ENCODE measurements at regions of chr4 and their contacts with region 1.

Region 1: GRCh38 chr4:127632420-127633403 is at the start of gene INTU:
- DNase-seq: peak; percentile 96
- H3K4me3 ChIP-seq: peak within 1 kb of the TSS; percentile 70 to 91 (median 90)
- H3K27ac ChIP-seq: peak within 1 kb of the TSS; percentile 92
- H3K4me1 ChIP-seq: peaks cover 16% of the 10 kb centered on the region
- H3K27me3 ChIP-seq: no peaks in the 10 kb centered on the region
- CTCF ChIP-seq: no peak
- total RNA-seq, gene INTU: 6.3 to 25.5 TPM

Region 2: GRCh38 chr4:127604949-127605709 is 27.6 kb before region 1 on chr4:
- CTCF ChIA-PET with region 1: interaction called, 15 read pairs
- dilution Hi-C with region 1: no loop called
- in situ Hi-C with region 1: no loop called
- intact Hi-C with region 1: no loop called
- DNase-seq: peak; percentile 12
- H3K4me3 ChIP-seq: no peak overlapping the region
- H3K27ac ChIP-seq: no peak overlapping the region
- H3K4me1 ChIP-seq: no peaks in the 10 kb centered on the region
- H3K27me3 ChIP-seq: no peaks in the 10 kb centered on the region
- CTCF ChIP-seq: peak; percentile 28 to 46

Region 3: GRCh38 chr4:127698789-127699200 is 66.1 kb after region 1 on chr4:
- CTCF ChIA-PET with region 1: no interaction called
- dilution Hi-C with region 1: no loop called
- in situ Hi-C with region 1: no loop called
- intact Hi-C with region 1: loop called (anchors 5 kb)
- DNase-seq: peak; percentile 87
- H3K4me3 ChIP-seq: no peak overlapping the region
- H3K27ac ChIP-seq: peak overlapping the region; percentile 16
- H3K4me1 ChIP-seq: no peaks in the 10 kb centered on the region
- H3K27me3 ChIP-seq: no peaks in the 10 kb centered on the region
- CTCF ChIP-seq: no peak

Region 4: GRCh38 chr4:127708985-127709384 is 76.3 kb after region 1 on chr4:
- CTCF ChIA-PET with region 1: no interaction called
- dilution Hi-C with region 1: loop called (anchors 5 kb)
- in situ Hi-C with region 1: no loop called
- intact Hi-C with region 1: no loop called
- DNase-seq: peak; percentile 98
- H3K4me3 ChIP-seq: peak overlapping the region; percentile 26 to 45 (median 26)
- H3K27ac ChIP-seq: peak overlapping the region; percentile 95
- H3K4me1 ChIP-seq: peaks cover 5% of the 10 kb centered on the region
- H3K27me3 ChIP-seq: no peaks in the 10 kb centered on the region
- CTCF ChIP-seq: no peak